Activated B cell treated with CpG ODN at 0.5 μM for 24 hours (primary cell): ENCODE measurements at regions of chr1 and their contacts with region 1.

Region 1: GRCh38 chr1:93078986-93079654 is at the start of gene MTF2:
- DNase-seq: peak; percentile 89
- ATAC-seq: peak; percentile 90
- H3K4me3 Mint-ChIP-seq: peak within 1 kb of the TSS; percentile 96
- H3K27ac Mint-ChIP-seq: peak within 1 kb of the TSS; percentile 97
- H3K4me1 Mint-ChIP-seq: peaks cover 54% of the 10 kb centered on the region
- H3K27me3 Mint-ChIP-seq: no peaks in the 10 kb centered on the region
- CTCF ChIP-seq: no peak
- total RNA-seq, gene MTF2: 49.1 and 59.7 TPM in 2 replicates

Region 2: DNA sequence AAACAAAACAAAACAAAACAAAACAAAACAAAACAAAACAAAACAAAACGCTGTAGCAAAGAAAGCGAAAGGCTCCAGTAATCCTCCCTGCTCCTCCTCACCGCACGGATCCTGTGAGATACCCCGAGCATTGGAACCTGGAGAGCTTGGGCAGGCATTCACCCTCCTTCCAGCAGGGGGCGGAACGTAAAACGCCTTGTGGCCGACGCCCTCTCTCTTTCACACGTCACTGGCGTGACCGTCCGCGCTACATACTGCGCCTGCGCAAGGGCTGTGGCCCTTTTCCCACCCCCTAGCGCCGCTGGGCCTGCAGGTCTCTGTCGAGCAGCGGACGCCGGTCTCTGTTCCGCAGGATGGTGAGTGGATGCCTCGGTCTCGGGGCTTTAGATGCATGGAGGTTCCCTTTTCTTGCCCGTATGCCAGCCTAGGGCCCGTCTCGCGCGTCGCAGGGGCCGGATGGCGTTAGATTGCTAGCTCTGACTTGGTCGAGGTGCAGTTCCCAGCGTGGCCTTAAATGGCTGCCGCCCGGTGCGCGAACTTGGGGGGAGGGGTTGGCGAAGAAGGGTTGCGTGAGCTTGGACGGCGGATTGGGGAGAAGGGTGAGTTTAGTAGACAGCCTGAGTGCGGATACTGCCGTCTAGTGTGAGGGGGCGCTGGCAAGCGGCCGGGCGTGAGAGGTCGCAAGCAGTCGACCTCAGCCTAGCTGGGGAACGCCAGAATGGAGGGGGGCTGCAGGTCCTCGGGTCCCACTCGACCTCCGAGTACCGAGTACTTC is 247.2 kb before region 1 on chr1 and contains the start of gene RPL5:
- CTCF ChIA-PET with region 1: no interaction called
- POLR2A ChIA-PET with region 1: interaction called, 22 read pairs
- intact Hi-C with region 1: loop called (anchors 1 kb)
- DNase-seq: peak; percentile 98
- ATAC-seq: peak; percentile 90
- H3K4me3 Mint-ChIP-seq: peak within 1 kb of the TSS; percentile 99
- H3K27ac Mint-ChIP-seq: peak within 1 kb of the TSS; percentile 97
- H3K4me1 Mint-ChIP-seq: peaks cover 48% of the 10 kb centered on the region
- H3K27me3 Mint-ChIP-seq: no peaks in the 10 kb centered on the region
- CTCF ChIP-seq: no peak
- total RNA-seq, gene RPL5: 1,685 and 1,766 TPM in 2 replicates

Region 3: DNA sequence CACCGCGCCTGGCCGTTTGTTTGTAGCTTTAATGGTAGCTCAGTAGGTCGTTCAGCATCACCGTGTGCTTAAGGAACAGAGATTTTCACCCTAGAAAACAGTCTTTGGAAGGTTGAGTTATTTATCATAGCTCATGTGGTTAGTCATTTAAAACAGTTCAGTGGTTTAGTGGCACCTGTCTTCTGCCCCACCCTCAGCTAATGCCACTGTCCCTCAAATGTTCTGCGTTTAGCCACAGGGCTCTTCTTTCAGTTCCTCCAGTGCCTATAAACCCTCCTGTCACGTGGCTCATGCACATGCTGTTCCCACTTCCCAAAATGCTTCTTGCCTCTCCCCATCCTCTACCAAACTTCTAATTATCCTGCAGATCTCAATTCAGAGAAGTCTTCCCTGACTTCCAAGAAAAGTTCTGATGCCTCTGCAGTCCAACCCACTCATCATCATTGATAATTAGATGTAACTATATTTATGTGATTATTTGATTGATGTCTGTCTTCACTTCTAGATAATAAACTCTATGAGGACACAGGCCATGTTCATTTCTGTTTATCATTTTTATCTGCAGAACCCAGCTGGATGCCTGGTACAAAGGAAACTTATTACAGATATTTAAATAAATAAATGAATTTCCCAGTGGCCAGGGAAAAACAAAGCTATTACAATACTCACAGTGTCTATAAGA is 103.4 kb before region 1 on chr1:
- CTCF ChIA-PET with region 1: no interaction called
- POLR2A ChIA-PET with region 1: interaction called, 10 read pairs
- intact Hi-C with region 1: no loop called
- DNase-seq: peak; percentile 48
- ATAC-seq: peak; percentile 73
- H3K4me3 Mint-ChIP-seq: peak overlapping the region; percentile 67
- H3K27ac Mint-ChIP-seq: peak overlapping the region; percentile 99
- H3K4me1 Mint-ChIP-seq: peaks cover 91% of the 10 kb centered on the region
- H3K27me3 Mint-ChIP-seq: no peaks in the 10 kb centered on the region
- CTCF ChIP-seq: no peak

Region 4: DNA sequence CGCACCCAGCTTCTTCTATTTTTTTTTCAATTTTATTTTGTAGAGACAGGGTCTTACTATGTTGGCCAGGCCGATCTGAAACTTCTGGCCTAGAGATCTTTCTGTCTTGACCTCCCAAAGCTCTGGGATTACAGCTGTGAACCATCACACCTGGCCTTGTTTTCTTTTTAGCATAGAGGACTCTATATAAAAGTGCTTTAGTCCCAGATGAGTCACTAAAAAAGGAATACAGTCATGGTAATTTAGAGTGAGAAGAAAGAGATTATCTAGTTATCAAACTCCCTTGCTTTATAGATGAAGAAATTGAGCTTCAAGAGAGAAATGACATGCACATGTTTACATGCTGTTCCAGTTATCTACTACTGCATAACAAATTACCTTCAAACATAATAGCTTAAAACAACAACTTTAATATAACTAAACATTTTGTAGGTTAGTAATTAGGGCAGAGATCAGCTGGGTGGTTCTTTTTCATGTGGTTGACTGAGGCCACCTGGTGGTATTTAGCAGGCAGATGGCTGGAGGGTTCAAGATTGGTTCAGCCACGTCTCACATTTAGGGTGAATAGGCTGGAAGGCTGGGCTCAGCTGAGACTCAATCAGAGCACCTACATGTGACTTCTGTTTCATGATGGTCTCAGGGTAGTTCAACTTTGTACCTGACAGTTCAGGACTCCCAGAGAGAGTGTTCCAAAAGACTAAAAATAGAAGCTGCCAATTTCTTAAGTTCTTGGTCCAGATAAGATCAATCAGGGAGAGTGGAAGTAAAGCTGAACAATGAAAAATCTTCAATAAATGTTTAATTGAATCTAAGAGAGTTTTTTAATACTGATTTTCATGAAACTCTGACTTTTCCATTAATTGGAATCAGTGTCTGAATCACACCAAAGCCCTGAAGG is 17.0 kb before region 1 on chr1:
- CTCF ChIA-PET with region 1: interaction called, 12 read pairs
- POLR2A ChIA-PET with region 1: interaction called, 14 read pairs
- intact Hi-C with region 1: no loop called
- DNase-seq: no peak
- ATAC-seq: peak; percentile 82
- H3K4me3 Mint-ChIP-seq: no peak overlapping the region
- H3K27ac Mint-ChIP-seq: no peak overlapping the region
- H3K4me1 Mint-ChIP-seq: no peaks in the 10 kb centered on the region
- H3K27me3 Mint-ChIP-seq: peaks cover 13% of the 10 kb centered on the region
- CTCF ChIP-seq: no peak

Region 5: GRCh38 chr1:93179886-93180722 is 101.0 kb after region 1 on chr1 and contains the start of gene TMED5:
- CTCF ChIA-PET with region 1: no interaction called
- POLR2A ChIA-PET with region 1: interaction called, 17 read pairs
- intact Hi-C with region 1: loop called (anchors 1 kb)
- DNase-seq: peak; percentile 93
- ATAC-seq: peak; percentile 84
- H3K4me3 Mint-ChIP-seq: peak within 1 kb of the TSS; percentile 94
- H3K27ac Mint-ChIP-seq: peak within 1 kb of the TSS; percentile 96
- H3K4me1 Mint-ChIP-seq: peaks cover 51% of the 10 kb centered on the region
- H3K27me3 Mint-ChIP-seq: no peaks in the 10 kb centered on the region
- CTCF ChIP-seq: no peak
- total RNA-seq, gene TMED5: 38.7 and 42.3 TPM in 2 replicates

Region 6: DNA sequence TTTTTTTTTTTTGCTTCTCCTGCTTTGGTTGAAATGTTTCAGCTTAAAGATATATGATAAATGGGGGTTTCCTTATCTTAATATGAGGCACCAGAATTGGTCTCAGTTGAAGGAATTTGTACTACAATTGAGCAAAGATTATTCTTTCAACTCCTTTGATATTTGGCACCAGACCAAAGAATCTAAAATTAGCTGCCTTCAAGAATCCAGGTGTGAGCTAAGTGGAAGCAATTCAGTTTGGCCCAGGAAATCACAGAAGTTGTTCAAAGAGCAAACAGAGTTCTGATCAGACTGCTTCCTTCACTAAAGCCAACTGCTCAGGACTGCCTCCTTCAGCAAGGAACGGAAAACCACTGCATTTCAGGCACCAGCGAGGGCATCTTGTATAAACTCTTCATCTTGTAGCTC is 670.8 kb after region 1 on chr1:
- CTCF ChIA-PET with region 1: no interaction called
- POLR2A ChIA-PET with region 1: interaction called, 3 read pairs
- intact Hi-C with region 1: loop called (anchors 1 kb)
- DNase-seq: no peak
- ATAC-seq: peak; percentile 62
- H3K4me3 Mint-ChIP-seq: peak overlapping the region; percentile 76
- H3K27ac Mint-ChIP-seq: peak overlapping the region; percentile 94
- H3K4me1 Mint-ChIP-seq: peaks cover 60% of the 10 kb centered on the region
- H3K27me3 Mint-ChIP-seq: no peaks in the 10 kb centered on the region
- CTCF ChIP-seq: no peak